ENCODE measurements at regions of chr3 and their contacts with region 1.

Region 1: GRCh38 chr3:29263476-29263875 is 17.4 kb upstream of the RBMS3 start:
- DNase-seq: no peak
- ATAC-seq: no peak
- H3K4me3 ChIP-seq: no peak overlapping the region
- H3K27ac ChIP-seq: no peak overlapping the region
- H3K4me1 ChIP-seq: no peaks in the 10 kb centered on the region
- H3K27me3 ChIP-seq: no peaks in the 10 kb centered on the region
- CTCF ChIP-seq: no peak
- POLR2A ChIP-seq: no peak
- RAD21 ChIP-seq: no peak

Region 2: GRCh38 chr3:29201604-29202003 is 61.9 kb before region 1 on chr3:
- CTCF ChIA-PET with region 1: no interaction called
- POLR2A ChIA-PET with region 1: interaction called, 10 read pairs
- dilution Hi-C with region 1: no loop called
- in situ Hi-C with region 1: no loop called
- intact Hi-C with region 1: no loop called
- DNase-seq: no peak
- ATAC-seq: no peak
- H3K4me3 ChIP-seq: no peak overlapping the region
- H3K27ac ChIP-seq: no peak overlapping the region
- H3K4me1 ChIP-seq: peaks cover 10% of the 10 kb centered on the region; the same call in 1 of the 2 replicates
- H3K27me3 ChIP-seq: no peaks in the 10 kb centered on the region
- CTCF ChIP-seq: no peak
- POLR2A ChIP-seq: no peak
- RAD21 ChIP-seq: no peak

Region 3: GRCh38 chr3:29555590-29555989 is 292.1 kb after region 1 on chr3:
- CTCF ChIA-PET with region 1: no interaction called
- POLR2A ChIA-PET with region 1: no interaction called
- dilution Hi-C with region 1: no loop called
- in situ Hi-C with region 1: no loop called
- intact Hi-C with region 1: no loop called
- DNase-seq: no peak
- ATAC-seq: peak; percentile 53; the same call in 1 of the 2 replicates
- H3K4me3 ChIP-seq: no peak overlapping the region
- H3K27ac ChIP-seq: no peak overlapping the region
- H3K4me1 ChIP-seq: peaks cover 13% of the 10 kb centered on the region
- H3K27me3 ChIP-seq: no peaks in the 10 kb centered on the region
- CTCF ChIP-seq: no peak
- POLR2A ChIP-seq: no peak
- RAD21 ChIP-seq: no peak

Measured in IMR-90 (cell line).